ENCODE measurements at regions of chr7 and their contacts with region 1.

Region 1: GRCh38 chr7:47008461-47008860 is 573.5 kb downstream of the TNS3 start:
- DNase-seq: no peak

Region 2: DNA sequence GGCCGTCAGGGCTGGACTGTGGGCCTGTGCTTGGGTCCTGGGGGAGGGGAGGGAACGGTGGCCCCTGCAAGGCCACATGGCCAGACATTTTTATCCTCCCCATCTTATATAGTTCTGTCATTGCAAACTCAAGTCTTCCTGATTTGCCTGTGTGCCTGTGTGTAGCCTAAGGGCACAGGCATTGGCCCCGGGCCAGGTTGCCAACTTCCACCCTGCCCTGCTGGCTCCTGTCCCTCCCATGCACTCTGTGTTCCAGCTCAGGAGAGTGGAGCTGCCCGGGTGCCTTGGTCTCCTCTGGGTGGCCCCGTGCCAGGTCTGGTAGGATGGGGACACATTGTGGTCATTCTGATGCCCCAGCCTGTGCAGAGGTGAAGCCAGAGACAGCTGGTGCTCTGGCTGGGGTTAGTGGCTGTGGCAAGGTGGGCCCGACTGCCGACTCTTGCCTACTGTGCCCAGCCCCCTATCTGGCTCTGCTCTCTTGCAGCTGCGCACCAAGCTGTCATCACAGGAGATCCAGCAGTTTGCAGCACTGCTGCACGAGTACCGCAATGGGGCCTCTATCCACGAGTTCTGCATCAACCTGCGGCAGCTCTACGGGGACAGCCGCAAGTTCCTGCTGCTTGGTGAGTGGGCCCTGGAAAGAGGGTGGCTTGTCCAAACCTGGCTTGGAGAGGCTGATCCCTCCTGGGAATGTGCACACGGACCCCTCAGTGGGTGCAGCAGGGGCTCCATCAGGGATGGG is 1934.5 kb before region 1 on chr7:
- intact Hi-C with region 1: loop called in 1 of 2 experiments (anchors 10 kb)
- DNase-seq: peak; percentile 68